ENCODE measurements at regions of chr16 and their contacts with region 1.

Region 1: DNA sequence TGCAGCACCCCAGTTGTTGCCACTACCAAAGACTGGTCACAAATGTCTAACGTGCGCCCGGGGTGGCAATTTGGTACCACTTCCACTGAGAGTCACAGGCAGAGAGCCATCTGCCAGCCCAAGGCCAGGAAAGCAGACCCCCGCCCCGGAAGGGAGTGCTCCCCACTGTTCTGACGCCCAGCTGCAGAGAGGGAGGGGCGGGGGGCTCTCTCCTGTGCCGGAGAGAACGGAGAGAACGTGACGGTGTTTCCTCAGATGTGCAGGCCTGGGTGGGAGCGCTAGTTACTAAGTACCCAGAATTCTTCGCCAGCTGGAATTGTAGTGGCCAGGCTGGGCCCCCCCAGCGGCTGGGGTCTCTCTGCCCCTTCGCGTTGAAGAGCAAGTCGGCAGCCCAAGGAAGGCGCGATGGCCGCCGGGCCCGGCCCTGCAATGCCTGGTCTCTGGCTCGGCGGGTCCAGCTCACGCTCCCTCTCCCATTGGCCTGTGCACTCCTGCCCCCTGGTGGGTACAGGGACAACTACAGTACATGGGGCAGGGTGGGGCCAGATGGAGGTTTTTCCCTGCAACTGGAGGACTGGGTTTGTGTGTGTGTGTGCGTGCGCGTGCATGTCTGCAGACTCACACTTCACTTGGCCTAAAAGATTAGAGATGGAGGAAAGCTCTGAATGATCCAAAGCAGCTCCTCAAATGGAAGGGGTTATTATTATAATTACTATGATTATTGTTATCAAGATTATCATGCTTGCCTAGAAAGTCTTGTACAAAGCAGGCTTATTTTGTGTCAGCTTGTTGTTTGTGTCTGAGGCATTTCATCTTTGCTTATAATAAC is 107.1 kb downstream of the AMFR start:
- DNase-seq: peak; percentile 58 to 81 (median 63)
- H3K4me3 ChIP-seq: peak overlapping the region; percentile 32
- H3K4me3 Mint-ChIP-seq: peak overlapping the region in 6 of 7 donors; percentile 53 to 83 (median 61)
- H3K27ac ChIP-seq: no peak overlapping the region
- H3K27ac Mint-ChIP-seq: peak overlapping the region in 2 of 8 donors; percentile 15 to 63
- H3K4me1 ChIP-seq: peaks cover 7% of the 10 kb centered on the region
- H3K4me1 Mint-ChIP-seq: peaks cover 11% of the 10 kb centered on the region in 3 donors
- H3K27me3 ChIP-seq: no peaks in the 10 kb centered on the region
- H3K27me3 Mint-ChIP-seq: no peaks in the 10 kb centered on the region

Region 2: GRCh38 chr16:55944377-55944802 is 373.8 kb before region 1 on chr16:
- CTCF ChIA-PET with region 1: interaction called, 76 read pairs
- POLR2A ChIA-PET with region 1: no interaction called
- DNase-seq: peak; percentile 2 to 59 (median 21)
- H3K4me3 ChIP-seq: no peak overlapping the region
- H3K4me3 Mint-ChIP-seq: no peak overlapping the region
- H3K27ac ChIP-seq: no peak overlapping the region
- H3K27ac Mint-ChIP-seq: no peak overlapping the region
- H3K4me1 ChIP-seq: no peaks in the 10 kb centered on the region
- H3K4me1 Mint-ChIP-seq: no peaks in the 10 kb centered on the region
- H3K27me3 ChIP-seq: peaks cover 2% of the 10 kb centered on the region
- H3K27me3 Mint-ChIP-seq: peaks cover 28 to 70% of the 10 kb centered on the region in 2 donors

Region 3: GRCh38 chr16:56203052-56203451 is 115.2 kb before region 1 on chr16:
- CTCF ChIA-PET with region 1: interaction called, 12 read pairs
- POLR2A ChIA-PET with region 1: no interaction called
- DNase-seq: peak in 3 of 5 donors; percentile 20 to 71 (median 62)
- H3K4me3 ChIP-seq: no peak overlapping the region
- H3K4me3 Mint-ChIP-seq: no peak overlapping the region
- H3K27ac ChIP-seq: no peak overlapping the region
- H3K27ac Mint-ChIP-seq: no peak overlapping the region
- H3K4me1 ChIP-seq: peaks cover 52% of the 10 kb centered on the region
- H3K4me1 Mint-ChIP-seq: peaks cover 0 to 5% (median 0%) of the 10 kb centered on the region in 3 donors
- H3K27me3 ChIP-seq: no peaks in the 10 kb centered on the region
- H3K27me3 Mint-ChIP-seq: no peaks in the 10 kb centered on the region

Region 4: DNA sequence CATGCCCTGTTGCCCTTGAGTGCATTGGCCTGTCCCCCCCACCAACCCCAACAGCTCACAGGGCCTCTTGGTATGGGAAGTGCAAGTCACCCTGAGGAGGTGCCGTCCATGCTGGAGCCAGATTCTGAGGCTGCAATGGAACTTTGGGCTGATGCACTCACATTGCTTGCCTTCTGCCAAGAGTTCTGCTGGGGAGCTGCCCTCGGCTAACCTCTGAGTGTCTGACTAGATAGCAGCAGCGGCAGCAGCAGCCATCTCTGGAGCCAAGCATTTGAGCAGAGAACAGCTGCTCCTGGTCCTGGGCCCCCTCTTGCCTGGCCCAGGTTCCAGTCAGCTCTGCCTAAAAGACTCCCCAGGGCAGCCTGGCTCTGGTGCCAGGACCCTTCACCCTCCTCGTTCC is 65.4 kb before region 1 on chr16:
- CTCF ChIA-PET with region 1: no interaction called
- POLR2A ChIA-PET with region 1: no interaction called
- DNase-seq: no peak
- H3K4me3 ChIP-seq: no peak overlapping the region
- H3K4me3 Mint-ChIP-seq: no peak overlapping the region
- H3K27ac ChIP-seq: no peak overlapping the region
- H3K27ac Mint-ChIP-seq: peak overlapping the region in 1 of 8 donors; percentile 77
- H3K4me1 ChIP-seq: no peaks in the 10 kb centered on the region
- H3K4me1 Mint-ChIP-seq: peaks cover 2 to 4% (median 3%) of the 10 kb centered on the region in 3 donors
- H3K27me3 ChIP-seq: no peaks in the 10 kb centered on the region
- H3K27me3 Mint-ChIP-seq: peaks cover 0 to 2% of the 10 kb centered on the region in 2 donors

Region 5: GRCh38 chr16:56277040-56277439 is 41.2 kb before region 1 on chr16:
- CTCF ChIA-PET with region 1: interaction called, 14 read pairs
- POLR2A ChIA-PET with region 1: no interaction called
- DNase-seq: no peak
- H3K4me3 ChIP-seq: no peak overlapping the region
- H3K4me3 Mint-ChIP-seq: peak overlapping the region in 2 of 7 donors; percentile 61 to 71
- H3K27ac ChIP-seq: no peak overlapping the region
- H3K27ac Mint-ChIP-seq: peak overlapping the region in 5 of 8 donors; percentile 12 to 55 (median 28)
- H3K4me1 ChIP-seq: peaks cover 29% of the 10 kb centered on the region
- H3K4me1 Mint-ChIP-seq: peaks cover 40 to 73% (median 40%) of the 10 kb centered on the region in 3 donors
- H3K27me3 ChIP-seq: no peaks in the 10 kb centered on the region
- H3K27me3 Mint-ChIP-seq: no peaks in the 10 kb centered on the region

Region 6: GRCh38 chr16:56300891-56301850 is 17.0 kb before region 1 on chr16:
- CTCF ChIA-PET with region 1: interaction called, 12 read pairs
- POLR2A ChIA-PET with region 1: no interaction called
- DNase-seq: no peak
- H3K4me3 ChIP-seq: no peak overlapping the region
- H3K4me3 Mint-ChIP-seq: no peak overlapping the region
- H3K27ac ChIP-seq: no peak overlapping the region
- H3K27ac Mint-ChIP-seq: peak overlapping the region in 2 of 8 donors; percentile 33 to 36
- H3K4me1 ChIP-seq: no peaks in the 10 kb centered on the region
- H3K4me1 Mint-ChIP-seq: peaks cover 0 to 6% (median 5%) of the 10 kb centered on the region in 3 donors
- H3K27me3 ChIP-seq: no peaks in the 10 kb centered on the region
- H3K27me3 Mint-ChIP-seq: peaks cover 0 to 2% of the 10 kb centered on the region in 2 donors

Region 7: DNA sequence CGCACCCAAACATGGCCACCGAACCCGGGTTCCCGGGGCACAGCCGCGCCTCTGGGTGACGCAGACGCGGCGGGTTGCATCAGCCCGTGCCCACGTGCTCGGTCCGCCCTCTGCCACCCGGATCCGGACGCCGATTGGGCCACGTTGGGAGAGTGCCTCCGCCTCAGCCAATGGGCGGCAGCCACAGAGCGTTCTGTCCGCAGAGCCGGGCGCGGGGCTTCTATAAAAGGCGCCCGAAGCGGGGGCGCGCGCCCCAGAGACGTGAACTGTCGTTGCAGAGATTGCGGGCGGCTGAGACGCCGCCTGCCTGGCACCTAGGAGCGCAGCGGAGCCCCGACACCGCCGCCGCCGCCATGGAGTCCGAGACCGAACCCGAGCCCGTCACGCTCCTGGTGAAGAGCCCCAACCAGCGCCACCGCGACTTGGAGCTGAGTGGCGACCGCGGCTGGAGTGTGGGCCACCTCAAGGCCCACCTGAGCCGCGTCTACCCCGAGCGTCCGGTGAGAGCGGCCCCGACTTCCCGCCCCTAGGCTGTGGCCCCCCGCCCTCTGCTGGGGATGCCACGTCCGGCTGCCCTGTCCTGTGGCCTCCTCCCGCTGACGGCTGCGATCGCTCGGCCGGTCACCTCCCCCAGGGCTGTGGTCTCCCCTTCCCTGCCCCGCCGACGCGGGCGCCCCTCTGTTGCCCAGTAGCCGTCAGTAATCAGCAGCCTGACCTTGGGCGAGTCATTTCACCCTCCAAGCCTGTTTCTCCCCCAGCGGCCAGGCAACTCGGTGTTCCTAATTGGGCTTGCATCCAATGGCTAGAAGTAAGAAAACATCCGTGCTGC is 613.9 kb after region 1 on chr16 and contains the start of gene HERPUD1:
- CTCF ChIA-PET with region 1: no interaction called
- POLR2A ChIA-PET with region 1: no interaction called
- DNase-seq: peak; percentile 98 to 99 (median 99)
- H3K4me3 ChIP-seq: peak within 1 kb of the TSS; percentile 69
- H3K4me3 Mint-ChIP-seq: peak within 1 kb of the TSS; percentile 95 to 100 (median 98)
- H3K27ac ChIP-seq: peak within 1 kb of the TSS; percentile 95
- H3K27ac Mint-ChIP-seq: peak within 1 kb of the TSS; percentile 95 to 99 (median 98)
- H3K4me1 ChIP-seq: peaks cover 47% of the 10 kb centered on the region
- H3K4me1 Mint-ChIP-seq: peaks cover 34 to 48% (median 47%) of the 10 kb centered on the region in 3 donors
- H3K27me3 ChIP-seq: no peaks in the 10 kb centered on the region
- H3K27me3 Mint-ChIP-seq: peaks cover 0 to 5% of the 10 kb centered on the region in 2 donors
- total RNA-seq, gene HERPUD1: 162 to 176 TPM

Measured in CD8-positive, alpha-beta memory T cell (primary cell).